ENCODE measurements at regions of chr9 and their contacts with region 1.

Region 1: GRCh38 chr9:115046824-115047223 is 71.1 kb downstream of the TNC start:
- DNase-seq: no peak
- H3K4me3 ChIP-seq: no peak overlapping the region
- H3K27ac ChIP-seq: no peak overlapping the region
- H3K4me1 ChIP-seq: no peaks in the 10 kb centered on the region
- H3K27me3 ChIP-seq: 0 out of 2 replicates have a peak, but pooled peaks cover 7% of the 10 kb centered on the region
- CTCF ChIP-seq: no peak

Region 2: GRCh38 chr9:114988962-114989599 is 57.7 kb before region 1 on chr9:
- CTCF ChIA-PET with region 1: no interaction called
- POLR2A ChIA-PET with region 1: no interaction called
- intact Hi-C with region 1: no loop called
- DNase-seq: peak; percentile 6 to 68
- H3K4me3 ChIP-seq: no peak overlapping the region
- H3K27ac ChIP-seq: no peak overlapping the region
- H3K4me1 ChIP-seq: peaks cover 15% of the 10 kb centered on the region
- H3K27me3 ChIP-seq: peaks cover 22% of the 10 kb centered on the region; the same call in 1 of the 2 replicates
- CTCF ChIP-seq: no peak

Region 3: DNA sequence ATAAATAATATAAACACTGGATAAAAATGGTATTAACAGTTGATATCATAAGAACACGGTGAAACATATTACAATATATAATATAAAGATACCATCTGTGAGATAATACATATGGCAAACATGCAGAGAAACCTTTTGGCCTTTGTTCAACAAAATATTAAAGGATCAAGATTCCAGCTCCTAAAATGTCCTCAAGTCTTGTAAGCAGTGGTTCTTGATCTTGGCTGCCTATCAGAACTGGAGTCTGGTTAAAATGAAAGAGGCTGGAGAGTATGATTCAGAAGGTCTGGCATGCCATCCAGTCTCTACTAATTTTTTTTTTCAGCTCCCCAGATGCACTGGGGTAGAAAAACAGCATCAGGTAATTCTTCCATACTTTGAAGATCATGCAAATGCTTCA is 12.1 kb before region 1 on chr9:
- CTCF ChIA-PET with region 1: no interaction called
- POLR2A ChIA-PET with region 1: no interaction called
- intact Hi-C with region 1: loop called (anchors 1 kb)
- DNase-seq: no peak
- H3K4me3 ChIP-seq: no peak overlapping the region
- H3K27ac ChIP-seq: no peak overlapping the region
- H3K4me1 ChIP-seq: no peaks in the 10 kb centered on the region
- H3K27me3 ChIP-seq: no peaks in the 10 kb centered on the region; the same call in 1 of the 2 replicates
- CTCF ChIP-seq: no peak

Region 4: GRCh38 chr9:115204904-115205453 is 158.2 kb after region 1 on chr9:
- CTCF ChIA-PET with region 1: no interaction called
- POLR2A ChIA-PET with region 1: no interaction called
- intact Hi-C with region 1: no loop called
- DNase-seq: peak in 1 of 2 experiments; percentile 84
- H3K4me3 ChIP-seq: no peak overlapping the region
- H3K27ac ChIP-seq: peak overlapping the region; percentile 39
- H3K4me1 ChIP-seq: peaks cover 24% of the 10 kb centered on the region
- H3K27me3 ChIP-seq: no peaks in the 10 kb centered on the region
- CTCF ChIP-seq: no peak

Region 5: DNA sequence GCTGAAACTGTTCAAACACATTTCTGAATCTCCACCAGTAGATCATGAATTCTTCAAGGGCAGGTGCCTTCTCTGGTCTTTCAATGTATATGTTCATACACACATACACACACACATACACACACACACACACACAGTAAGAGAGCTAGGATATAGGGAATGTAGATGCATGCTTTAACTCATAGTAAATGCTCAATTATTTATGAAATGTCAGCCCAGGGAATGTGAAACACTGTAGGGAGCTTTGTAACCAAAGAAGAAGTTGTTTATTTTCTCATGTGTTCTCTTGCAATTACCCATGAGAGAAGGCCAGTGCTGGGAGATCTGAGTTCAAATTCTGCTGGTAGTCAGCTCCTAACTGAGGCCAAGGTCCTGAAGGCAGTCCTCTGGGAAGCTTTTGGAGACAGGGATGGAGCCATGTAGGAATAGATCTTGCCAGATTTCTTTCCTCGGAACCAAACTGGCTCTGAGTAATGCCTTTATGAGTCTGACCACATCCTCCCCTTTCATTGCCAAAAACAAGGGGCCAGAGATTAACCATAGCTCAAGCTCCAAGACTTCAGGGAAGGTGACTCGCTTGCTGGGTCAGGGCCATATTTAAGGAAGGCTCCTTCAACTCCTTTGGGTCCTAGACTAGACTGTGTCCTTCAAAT is 558.1 kb after region 1 on chr9:
- CTCF ChIA-PET with region 1: no interaction called
- POLR2A ChIA-PET with region 1: no interaction called
- intact Hi-C with region 1: no loop called
- DNase-seq: no peak
- H3K4me3 ChIP-seq: no peak overlapping the region
- H3K27ac ChIP-seq: no peak overlapping the region
- H3K4me1 ChIP-seq: no peaks in the 10 kb centered on the region; the same call in 1 of the 2 replicates
- H3K27me3 ChIP-seq: no peaks in the 10 kb centered on the region
- CTCF ChIP-seq: no peak

Measured in PC-9 (cell line).